CD14-positive monocyte (primary cell): ENCODE measurements at regions of chr5 and their contacts with region 1.

Region 1: DNA sequence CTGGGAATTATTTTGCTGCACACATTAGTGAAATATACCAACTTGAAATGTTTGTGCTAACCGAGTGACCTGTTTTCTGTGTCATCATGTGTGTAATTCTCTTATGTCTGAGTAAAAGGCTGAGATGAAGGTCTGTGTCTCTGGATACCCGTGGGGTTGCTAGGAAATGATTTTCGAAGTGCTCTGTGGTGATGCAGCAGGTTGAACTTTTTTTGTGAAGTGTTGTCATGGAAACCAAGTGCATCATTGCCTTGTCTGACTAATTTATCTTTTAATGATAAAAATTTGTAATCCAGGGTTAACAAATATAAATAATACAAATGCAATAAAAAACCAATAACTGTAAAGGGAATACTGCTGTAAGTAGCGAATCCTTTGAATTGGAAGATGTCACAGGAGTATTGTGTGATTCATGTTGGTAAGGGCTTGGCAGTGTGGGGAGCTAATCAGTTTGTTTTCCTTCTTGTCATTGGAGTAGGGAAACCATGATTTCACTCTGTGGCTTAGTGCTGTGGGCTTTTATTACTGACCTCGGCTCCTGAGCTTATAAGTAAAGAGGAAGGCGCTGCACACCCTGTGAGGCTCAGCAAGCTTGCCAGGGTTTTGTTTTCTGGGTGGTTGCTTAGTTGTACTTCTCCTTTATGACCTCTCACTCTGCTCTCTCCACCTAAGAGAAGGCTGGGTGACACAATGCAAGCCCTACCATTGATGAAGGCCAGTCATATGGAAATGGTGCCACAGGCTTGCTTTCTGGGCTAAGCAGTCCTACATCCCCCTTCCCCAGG is 22.3 kb downstream of the PDE8B start:
- DNase-seq: peak; percentile 78 to 81 (median 80)
- H3K4me3 ChIP-seq: peak overlapping the region in 1 of 3 experiments; percentile 3
- H3K4me3 Mint-ChIP-seq: no peak overlapping the region
- H3K27ac ChIP-seq: peak overlapping the region; percentile 14 to 86
- H3K27ac Mint-ChIP-seq: peak overlapping the region; percentile 65 to 94 (median 83)
- H3K4me1 ChIP-seq: peaks cover 37 to 47% of the 10 kb centered on the region in 2 donors
- H3K4me1 Mint-ChIP-seq: peaks cover 41% of the 10 kb centered on the region
- H3K27me3 ChIP-seq: no peaks in the 10 kb centered on the region
- H3K27me3 Mint-ChIP-seq: peaks cover 0 to 2% (median 0%) of the 10 kb centered on the region in 3 donors
- CTCF ChIP-seq: no peak

Region 2: DNA sequence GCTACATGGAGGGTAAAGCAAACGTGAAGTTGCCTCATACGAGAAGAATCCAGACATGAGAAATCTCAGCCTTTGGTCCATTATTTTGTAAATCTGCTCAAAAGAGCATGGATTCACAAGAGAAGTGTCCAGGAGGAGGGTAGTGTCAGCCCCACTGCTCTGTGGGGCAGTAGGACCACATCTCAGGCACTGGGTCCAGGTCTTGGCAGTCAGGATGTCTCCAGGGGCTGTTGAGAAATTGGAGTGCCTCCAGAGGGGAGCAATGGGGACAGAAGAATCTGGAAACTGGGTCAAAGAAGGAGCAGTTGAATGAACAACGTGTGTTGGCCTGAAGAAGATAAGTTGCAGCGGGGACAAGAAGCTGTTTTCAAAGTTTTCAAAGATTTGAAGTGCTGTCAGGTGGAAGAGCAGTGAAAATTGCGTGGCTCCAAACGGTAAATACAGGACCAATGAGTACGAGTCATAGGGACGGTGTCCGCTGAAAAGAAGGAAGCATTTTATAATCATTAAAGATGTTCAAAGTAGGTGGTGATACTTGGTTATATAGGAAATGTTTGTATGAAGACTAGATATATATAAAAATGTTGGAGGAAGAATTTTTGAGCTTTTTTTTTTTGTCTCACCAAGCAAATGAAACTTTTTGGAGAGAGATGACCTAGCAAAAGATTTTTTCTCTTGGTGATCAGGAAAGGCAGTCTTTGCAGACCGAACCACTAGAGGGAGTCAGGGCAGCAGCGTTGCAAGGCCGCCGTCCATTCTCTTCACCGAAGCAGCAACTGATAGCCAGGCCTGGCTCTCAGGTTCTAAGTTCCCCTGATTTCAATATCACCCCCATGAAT is 88.5 kb before region 1 on chr5:
- intact Hi-C with region 1: no loop called
- DNase-seq: peak; percentile 51 to 68 (median 66)
- H3K4me3 ChIP-seq: no peak overlapping the region
- H3K4me3 Mint-ChIP-seq: no peak overlapping the region
- H3K27ac ChIP-seq: no peak overlapping the region
- H3K27ac Mint-ChIP-seq: peak overlapping the region in 2 of 7 donors; percentile 10 to 72
- H3K4me1 ChIP-seq: peaks cover 20 to 22% of the 10 kb centered on the region in 2 donors
- H3K4me1 Mint-ChIP-seq: peaks cover 34% of the 10 kb centered on the region
- H3K27me3 ChIP-seq: no peaks in the 10 kb centered on the region
- H3K27me3 Mint-ChIP-seq: peaks cover 0 to 2% (median 0%) of the 10 kb centered on the region in 3 donors
- CTCF ChIP-seq: peak; percentile 90

Region 3: GRCh38 chr5:77259476-77259875 is 26.7 kb after region 1 on chr5:
- intact Hi-C with region 1: loop called in 1 of 2 experiments (anchors 1 kb)
- DNase-seq: peak in 1 of 3 donors; percentile 24
- H3K4me3 ChIP-seq: no peak overlapping the region
- H3K4me3 Mint-ChIP-seq: no peak overlapping the region
- H3K27ac ChIP-seq: no peak overlapping the region
- H3K27ac Mint-ChIP-seq: no peak overlapping the region
- H3K4me1 ChIP-seq: peaks cover 0 to 4% of the 10 kb centered on the region in 2 donors
- H3K4me1 Mint-ChIP-seq: peaks cover 17% of the 10 kb centered on the region
- H3K27me3 ChIP-seq: no peaks in the 10 kb centered on the region
- H3K27me3 Mint-ChIP-seq: peaks cover 4 to 7% (median 5%) of the 10 kb centered on the region in 3 donors
- CTCF ChIP-seq: no peak

Region 4: DNA sequence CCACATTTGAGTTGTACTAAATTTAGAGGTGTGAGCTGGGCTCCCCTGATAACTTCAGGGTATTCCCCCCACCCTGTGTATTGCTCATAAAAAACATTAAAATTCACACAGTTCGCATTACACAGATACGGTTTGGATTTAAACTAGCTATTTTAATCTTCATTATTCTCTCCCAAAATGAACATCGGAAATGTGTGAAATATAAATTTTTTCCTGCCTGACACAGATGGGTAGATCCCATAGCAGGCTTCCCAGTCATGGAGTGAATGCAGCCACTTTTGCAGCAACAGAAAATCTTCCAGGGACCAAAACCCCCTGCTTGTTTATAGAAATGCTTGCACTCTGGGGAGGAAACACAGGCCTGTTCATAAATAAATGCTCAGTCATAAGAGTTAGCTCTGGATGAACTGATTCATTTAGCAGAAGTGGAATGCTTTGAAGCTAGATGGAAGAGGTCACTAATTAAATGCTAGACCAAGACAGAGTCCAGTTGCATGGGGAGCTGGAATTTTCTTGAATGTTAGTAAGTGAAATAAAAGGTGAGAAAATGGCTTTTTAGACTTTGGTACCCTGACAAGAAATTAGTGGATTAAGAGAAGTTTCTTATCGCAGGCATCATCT is 93.3 kb after region 1 on chr5:
- intact Hi-C with region 1: no loop called
- DNase-seq: no peak
- H3K4me3 ChIP-seq: no peak overlapping the region
- H3K4me3 Mint-ChIP-seq: no peak overlapping the region
- H3K27ac ChIP-seq: no peak overlapping the region
- H3K27ac Mint-ChIP-seq: no peak overlapping the region
- H3K4me1 ChIP-seq: no peaks in the 10 kb centered on the region
- H3K4me1 Mint-ChIP-seq: no peaks in the 10 kb centered on the region
- H3K27me3 ChIP-seq: no peaks in the 10 kb centered on the region
- H3K27me3 Mint-ChIP-seq: no peaks in the 10 kb centered on the region
- CTCF ChIP-seq: no peak